AG04449 (cell line): ENCODE measurements at regions of chr12 and their contacts with region 1.

Region 1: GRCh38 chr12:59113831-59114615 is 193.7 kb upstream of the LRIG3 start:
- DNase-seq: peak; percentile 42
- H3K4me3 ChIP-seq: no peak overlapping the region
- CTCF ChIP-seq: peak; percentile 89

Region 2: DNA sequence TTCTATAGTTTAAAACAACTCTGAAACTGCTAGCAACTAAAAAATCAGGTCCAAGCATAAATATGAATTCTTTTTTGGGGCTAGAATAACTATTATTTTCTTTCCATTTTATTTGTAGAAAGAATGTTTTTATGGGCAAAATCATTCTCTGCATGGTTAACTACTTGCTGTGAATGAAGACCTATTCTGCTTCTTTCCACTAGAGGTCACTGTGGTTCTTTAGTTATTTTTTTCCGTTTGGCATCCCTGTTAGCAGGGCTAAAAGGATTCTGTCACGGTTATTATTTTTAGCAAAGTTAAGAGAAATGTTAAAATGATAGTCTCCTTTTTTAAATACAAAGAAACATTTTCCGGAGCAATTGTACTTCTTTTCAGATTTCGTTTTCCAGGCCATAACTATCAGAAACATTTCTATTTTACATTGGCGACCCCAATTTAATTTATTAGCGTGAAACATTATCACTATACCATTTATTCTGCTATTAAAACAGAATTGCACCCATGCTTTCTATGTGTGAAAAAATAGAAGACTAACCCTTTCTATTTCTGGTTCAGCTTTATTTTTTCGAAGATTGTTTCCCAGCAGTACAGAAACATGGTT is 767.9 kb before region 1 on chr12:
- CTCF ChIA-PET with region 1: interaction called, 15 read pairs
- POLR2A ChIA-PET with region 1: no interaction called
- DNase-seq: no peak
- H3K4me3 ChIP-seq: no peak overlapping the region
- CTCF ChIP-seq: peak; percentile 29

Region 3: GRCh38 chr12:59093073-59093772 is 20.8 kb before region 1 on chr12:
- CTCF ChIA-PET with region 1: interaction called, 37 read pairs
- POLR2A ChIA-PET with region 1: no interaction called
- DNase-seq: peak; percentile 36
- H3K4me3 ChIP-seq: no peak overlapping the region
- CTCF ChIP-seq: no peak

Region 4: GRCh38 chr12:59142175-59142790 is 28.3 kb after region 1 on chr12:
- CTCF ChIA-PET with region 1: interaction called, 29 read pairs
- POLR2A ChIA-PET with region 1: no interaction called
- DNase-seq: no peak
- H3K4me3 ChIP-seq: no peak overlapping the region
- CTCF ChIP-seq: no peak

Region 5: GRCh38 chr12:59158066-59158465 is 44.0 kb after region 1 on chr12:
- CTCF ChIA-PET with region 1: interaction called, 161 read pairs
- POLR2A ChIA-PET with region 1: no interaction called
- DNase-seq: no peak
- H3K4me3 ChIP-seq: no peak overlapping the region
- CTCF ChIP-seq: no peak